ENCODE measurements at regions of chr22 and their contacts with region 1.

Region 1: DNA sequence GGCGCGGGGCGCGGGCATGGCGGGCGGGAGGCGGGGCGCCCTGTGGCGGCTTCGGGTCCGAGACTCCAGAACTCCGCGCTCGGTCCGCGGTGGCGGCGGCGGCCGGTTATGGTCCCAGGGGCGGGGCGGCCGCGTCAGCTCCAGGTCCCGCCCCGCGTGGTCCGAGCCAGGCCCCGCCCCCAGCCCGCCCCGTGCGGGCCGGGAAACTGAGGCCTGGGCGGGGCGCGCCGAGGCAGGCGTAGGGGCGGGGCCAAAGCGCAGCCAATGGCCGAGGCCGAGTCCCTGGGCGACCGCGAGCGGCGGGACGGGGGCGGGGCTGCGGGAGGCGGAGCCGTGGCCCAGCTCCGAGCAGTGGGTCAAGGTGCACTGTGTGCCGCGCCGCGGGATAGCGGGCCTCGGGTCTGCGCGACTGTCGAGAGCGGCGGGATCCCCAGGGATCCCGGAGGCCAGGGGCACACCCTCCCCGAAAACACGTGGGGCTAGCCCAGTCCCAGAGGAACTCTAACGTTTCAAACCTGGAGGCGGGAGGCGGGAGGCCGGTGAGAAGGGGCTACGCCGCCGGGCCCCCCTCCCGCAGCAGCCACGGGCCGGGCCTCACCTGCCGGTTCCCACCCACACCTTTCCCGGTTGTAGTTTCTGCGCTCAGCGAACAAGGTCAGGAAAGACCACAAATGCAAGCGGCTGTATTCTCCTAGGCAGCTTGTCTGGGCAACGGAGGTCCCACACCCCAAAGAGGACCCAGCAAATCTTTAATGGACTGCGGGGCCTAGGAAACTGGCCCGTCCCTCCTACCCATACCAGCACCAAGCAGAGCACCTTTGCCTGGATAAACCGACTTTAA is at the start of gene SLC25A1:
- DNase-seq: peak; percentile 95
- H3K4me3 ChIP-seq: peak within 1 kb of the TSS; percentile 83 to 98 (median 92)
- H3K27ac ChIP-seq: peak within 1 kb of the TSS; percentile 90 to 97 (median 94)
- H3K4me1 ChIP-seq: peaks cover 30 to 53% (median 49%) of the 10 kb centered on the region in 4 donors
- H3K27me3 ChIP-seq: no peaks in the 10 kb centered on the region
- CTCF ChIP-seq: no peak
- EP300 ChIP-seq: no peak
- POLR2A ChIP-seq: no peak
- total RNA-seq, gene SLC25A1: 57.3 to 88.9 (median 71.8) TPM

Region 2: GRCh38 chr22:19143967-19144400 is 34.9 kb before region 1 on chr22:
- intact Hi-C with region 1: loop called (anchors 5 kb)
- DNase-seq: no peak
- H3K4me3 ChIP-seq: peak overlapping the region; percentile 77 to 89 (median 80)
- H3K27ac ChIP-seq: peak overlapping the region; percentile 78 to 86 (median 86)
- H3K4me1 ChIP-seq: peaks cover 8 to 23% (median 19%) of the 10 kb centered on the region in 4 donors
- H3K27me3 ChIP-seq: peaks cover 0 to 14% (median 3%) of the 10 kb centered on the region in 4 donors
- CTCF ChIP-seq: no peak
- EP300 ChIP-seq: no peak
- POLR2A ChIP-seq: no peak

Region 3: DNA sequence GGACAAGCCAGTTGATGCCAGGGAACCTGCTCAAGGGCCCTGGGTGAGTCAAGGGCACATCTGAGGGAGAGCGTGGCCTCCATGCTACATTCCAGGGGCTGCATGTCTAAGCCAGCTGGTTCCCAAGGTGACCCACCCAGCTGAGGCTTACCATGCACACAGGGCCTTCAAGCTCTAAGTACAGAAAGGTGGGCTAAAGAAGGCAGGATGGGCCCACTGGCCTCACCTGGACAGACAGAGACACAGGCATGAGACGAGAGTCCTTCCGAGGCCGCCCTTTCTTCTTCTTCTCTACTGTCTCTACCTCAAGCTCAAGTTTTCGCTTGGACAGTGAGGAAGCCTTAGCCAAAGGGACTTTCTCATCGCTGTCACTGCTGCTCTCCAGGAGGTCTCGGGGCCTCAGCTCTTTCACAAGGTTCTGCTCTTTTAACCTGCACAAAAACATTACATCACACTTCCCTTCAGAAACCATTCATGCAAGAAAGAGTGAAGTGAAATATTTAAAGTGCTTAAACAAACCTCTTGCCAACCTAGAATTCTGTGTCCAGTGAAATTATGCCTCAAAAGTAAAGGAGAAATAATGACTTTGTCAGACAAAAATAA is 182.7 kb after region 1 on chr22:
- intact Hi-C with region 1: loop called (anchors 10 kb)
- DNase-seq: peak; percentile 70
- H3K4me3 ChIP-seq: no peak overlapping the region
- H3K27ac ChIP-seq: no peak overlapping the region
- H3K4me1 ChIP-seq: peaks cover 0 to 4% (median 0%) of the 10 kb centered on the region in 4 donors
- H3K27me3 ChIP-seq: no peaks in the 10 kb centered on the region
- CTCF ChIP-seq: no peak
- EP300 ChIP-seq: no peak
- POLR2A ChIP-seq: no peak

Region 4: DNA sequence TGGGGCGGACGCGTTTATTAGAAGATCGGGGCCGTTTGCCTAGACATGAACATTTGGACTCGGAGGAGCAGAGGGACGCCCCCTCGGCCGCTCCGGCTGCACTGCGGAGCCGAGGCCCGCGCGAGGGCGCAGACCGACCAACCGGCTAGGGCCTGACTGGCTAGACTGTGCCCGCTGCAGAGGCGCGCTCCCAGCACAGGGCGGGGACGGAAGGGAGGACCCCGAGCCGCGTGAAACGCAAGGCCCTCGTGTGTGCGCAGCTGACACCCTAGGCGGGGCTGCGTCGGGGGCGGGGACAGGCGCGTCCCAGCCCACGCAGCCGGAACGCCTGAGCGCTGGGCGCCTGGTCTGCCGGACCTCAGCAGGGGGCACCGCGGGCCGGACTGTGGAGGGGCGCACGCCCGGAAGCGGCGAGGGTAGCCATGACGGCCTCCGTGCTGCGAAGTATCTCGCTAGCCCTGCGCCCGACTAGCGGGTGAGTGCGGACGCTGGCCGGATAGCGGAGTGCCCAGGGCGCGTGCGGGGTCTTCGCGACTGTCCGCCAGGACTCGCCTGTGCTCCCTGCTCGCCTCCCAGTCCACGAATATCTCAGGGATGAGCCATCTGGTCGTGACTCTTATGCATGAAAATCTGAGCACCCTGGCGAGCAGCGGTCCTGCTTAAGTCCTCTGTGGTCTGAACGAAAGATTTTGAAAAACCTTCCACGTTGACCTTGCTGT is 253.4 kb after region 1 on chr22 and contains the start of gene MRPL40:
- intact Hi-C with region 1: loop called (anchors 5 kb)
- DNase-seq: peak; percentile 96
- H3K4me3 ChIP-seq: peak within 1 kb of the TSS; percentile 82 to 98 (median 92)
- H3K27ac ChIP-seq: peak within 1 kb of the TSS; percentile 92 to 99 (median 98)
- H3K4me1 ChIP-seq: peaks cover 30 to 45% (median 38%) of the 10 kb centered on the region in 4 donors
- H3K27me3 ChIP-seq: no peaks in the 10 kb centered on the region
- CTCF ChIP-seq: peak in 2 of 3 experiments; percentile 8 to 33
- EP300 ChIP-seq: no peak
- POLR2A ChIP-seq: peak; percentile 60
- total RNA-seq, gene MRPL40: 21.2 to 31.2 (median 27.7) TPM

Region 5: DNA sequence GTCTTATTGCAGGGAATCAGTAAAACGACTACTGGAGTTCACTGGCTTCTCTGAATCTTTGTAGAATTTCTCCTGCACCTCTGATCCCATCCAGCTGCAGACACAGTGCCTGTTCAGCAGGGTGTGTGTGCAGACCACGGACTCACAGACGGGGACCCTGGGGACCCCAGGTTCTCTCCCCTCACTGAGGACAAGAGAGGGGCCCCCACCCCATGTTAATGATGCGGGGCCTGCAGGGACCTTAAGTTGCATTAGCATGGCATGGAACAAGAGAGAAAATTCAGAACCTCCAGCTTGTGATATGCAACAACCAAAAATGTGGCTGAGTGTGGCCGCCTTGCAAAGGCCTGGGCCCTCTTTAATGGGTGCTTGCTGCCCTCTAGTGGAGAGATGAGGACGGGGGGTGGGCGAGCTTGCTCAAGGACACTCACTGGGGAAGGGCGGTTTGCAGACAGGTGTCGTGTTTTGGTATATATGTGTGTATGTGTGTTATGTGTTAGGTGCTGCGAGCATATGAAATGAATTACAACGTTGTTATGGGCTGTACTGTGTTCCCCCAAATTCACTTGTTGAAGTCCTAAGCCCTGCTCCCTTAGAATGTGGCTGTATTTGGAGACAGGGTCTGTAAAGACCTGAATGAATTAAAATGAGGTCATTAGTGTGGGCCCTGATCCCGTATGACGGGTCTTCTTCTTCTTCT is 451.0 kb after region 1 on chr22:
- intact Hi-C with region 1: loop called (anchors 10 kb)
- DNase-seq: no peak
- H3K4me3 ChIP-seq: no peak overlapping the region
- H3K27ac ChIP-seq: no peak overlapping the region
- H3K4me1 ChIP-seq: no peaks in the 10 kb centered on the region
- H3K27me3 ChIP-seq: peaks cover 0 to 56% (median 1%) of the 10 kb centered on the region in 4 donors
- CTCF ChIP-seq: peak; percentile 85 to 88 (median 87)
- EP300 ChIP-seq: no peak
- POLR2A ChIP-seq: no peak

Measured in esophagus muscularis mucosa (tissue), 4 donors.